Endothelial cell of umbilical vein (primary cell): ENCODE measurements at regions of chr2 and their contacts with region 1.

Region 1: DNA sequence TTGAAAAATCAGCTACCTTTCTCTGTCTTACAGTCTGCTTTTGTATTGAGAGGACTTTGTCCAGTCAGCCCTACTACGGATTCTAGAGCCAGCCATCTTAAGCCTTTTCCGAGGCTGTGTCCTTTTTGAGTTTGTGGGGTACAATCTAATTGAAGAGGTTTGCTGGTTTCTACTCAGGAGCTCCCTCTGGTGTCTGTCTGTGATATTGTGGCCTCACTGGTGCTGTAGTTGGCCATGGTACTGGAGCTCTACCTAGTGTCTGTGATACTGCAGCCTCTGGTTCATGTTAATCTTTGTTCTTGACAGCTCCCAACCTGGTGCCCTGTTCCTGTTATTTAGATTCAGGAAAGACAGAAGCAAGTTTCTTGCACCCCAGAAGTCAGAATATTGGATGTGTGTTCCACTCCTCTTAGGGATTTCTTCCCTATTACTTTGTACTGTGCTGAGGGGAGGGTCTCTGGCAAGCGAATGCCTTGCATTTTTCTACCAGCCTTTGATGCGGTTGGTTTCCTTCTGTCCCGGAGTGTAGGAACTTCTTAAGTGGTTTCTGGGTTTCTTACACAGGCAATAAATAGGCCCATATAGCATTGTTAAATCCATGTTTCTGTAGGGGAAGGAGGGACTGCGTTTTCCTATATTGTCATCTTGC is 78.5 kb downstream of the ACSL3 start:
- DNase-seq: peak; percentile 75
- H3K4me3 ChIP-seq: no peak overlapping the region
- H3K27ac ChIP-seq: no peak overlapping the region
- H3K4me1 ChIP-seq: no peaks in the 10 kb centered on the region
- H3K27me3 ChIP-seq: no peaks in the 10 kb centered on the region
- CTCF ChIP-seq: peak; percentile 85 to 87
- POLR2A ChIP-seq: no peak

Region 2: GRCh38 chr2:222797261-222797660 is 142.1 kb before region 1 on chr2:
- CTCF ChIA-PET with region 1: interaction called, 13 read pairs
- POLR2A ChIA-PET with region 1: no interaction called
- dilution Hi-C with region 1: no loop called
- intact Hi-C with region 1: no loop called
- DNase-seq: peak; percentile 48
- H3K4me3 ChIP-seq: no peak overlapping the region
- H3K27ac ChIP-seq: no peak overlapping the region
- H3K4me1 ChIP-seq: peaks cover 2% of the 10 kb centered on the region
- H3K27me3 ChIP-seq: peaks cover 0 to 2% of the 10 kb centered on the region in 2 experiments
- CTCF ChIP-seq: peak; percentile 30 to 43
- POLR2A ChIP-seq: no peak

Region 3: DNA sequence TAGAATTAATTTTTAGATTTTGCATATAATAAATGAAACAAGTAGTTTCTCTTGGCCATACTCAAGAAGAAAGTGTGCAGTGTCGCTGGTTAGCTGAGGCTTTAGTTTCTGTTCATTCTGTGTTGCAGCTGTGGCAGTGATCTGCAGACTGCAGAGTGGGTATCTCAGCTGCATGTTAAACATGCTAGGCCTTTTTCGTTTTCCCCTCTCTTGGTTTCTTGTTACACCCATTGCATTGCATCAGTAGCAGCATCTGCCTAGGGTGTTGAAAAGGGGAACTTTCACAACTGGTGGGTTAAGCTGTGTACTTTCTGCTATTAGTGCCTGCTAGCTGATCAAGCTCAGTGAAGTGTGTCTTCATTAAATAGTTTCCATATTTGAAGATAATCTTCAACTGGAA is 27.2 kb before region 1 on chr2:
- CTCF ChIA-PET with region 1: interaction called, 26 read pairs
- POLR2A ChIA-PET with region 1: no interaction called
- dilution Hi-C with region 1: no loop called
- intact Hi-C with region 1: loop called (anchors 1 kb)
- DNase-seq: no peak
- H3K4me3 ChIP-seq: no peak overlapping the region
- H3K27ac ChIP-seq: no peak overlapping the region
- H3K4me1 ChIP-seq: no peaks in the 10 kb centered on the region
- H3K27me3 ChIP-seq: no peaks in the 10 kb centered on the region
- CTCF ChIP-seq: no peak
- POLR2A ChIP-seq: no peak

Region 4: GRCh38 chr2:222919841-222920526 is 19.3 kb before region 1 on chr2:
- CTCF ChIA-PET with region 1: interaction called, 21 read pairs
- POLR2A ChIA-PET with region 1: no interaction called
- dilution Hi-C with region 1: no loop called
- intact Hi-C with region 1: loop called (anchors 1 kb)
- DNase-seq: peak; percentile 69
- H3K4me3 ChIP-seq: no peak overlapping the region
- H3K27ac ChIP-seq: peak overlapping the region; percentile 28
- H3K4me1 ChIP-seq: peaks cover 15% of the 10 kb centered on the region
- H3K27me3 ChIP-seq: no peaks in the 10 kb centered on the region
- CTCF ChIP-seq: no peak
- POLR2A ChIP-seq: no peak

Region 5: DNA sequence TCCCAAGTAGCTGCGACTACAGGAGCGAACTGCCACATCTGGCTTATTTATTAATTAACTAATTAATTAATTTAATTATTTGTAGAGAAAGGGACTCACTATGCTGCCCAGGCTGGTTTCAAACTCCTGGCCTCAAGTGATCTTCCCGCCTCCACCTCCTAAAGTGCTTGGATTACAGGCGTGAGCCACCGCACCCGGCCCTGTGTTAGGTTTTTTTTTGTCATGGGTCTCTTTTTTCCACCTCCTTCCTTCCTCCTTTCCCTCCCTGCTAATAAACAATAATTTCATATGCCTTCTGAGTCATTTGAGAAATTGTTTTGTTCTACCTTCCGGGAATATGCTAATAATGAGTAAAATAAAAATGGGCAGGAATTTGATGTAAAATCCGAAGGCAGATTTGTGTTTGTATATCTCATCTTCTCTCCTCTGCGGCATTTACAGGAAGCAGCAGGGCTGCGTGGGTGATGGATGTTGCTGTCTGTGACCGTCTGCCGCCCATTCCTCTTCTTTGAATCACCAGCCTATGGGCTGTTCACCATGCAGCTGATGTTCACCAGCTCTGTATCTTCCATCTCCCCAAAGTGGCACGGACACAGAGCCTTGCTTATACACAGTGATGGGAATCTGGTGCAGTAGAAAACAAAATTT is 11.4 kb after region 1 on chr2:
- CTCF ChIA-PET with region 1: interaction called, 32 read pairs
- POLR2A ChIA-PET with region 1: no interaction called
- dilution Hi-C with region 1: no loop called
- intact Hi-C with region 1: no loop called
- DNase-seq: peak; percentile 50
- H3K4me3 ChIP-seq: no peak overlapping the region
- H3K27ac ChIP-seq: no peak overlapping the region
- H3K4me1 ChIP-seq: peaks cover 8% of the 10 kb centered on the region
- H3K27me3 ChIP-seq: no peaks in the 10 kb centered on the region
- CTCF ChIP-seq: no peak
- POLR2A ChIP-seq: no peak